ENCODE measurements at regions of chr11 and their contacts with region 1.

Region 1: GRCh38 chr11:120985718-120986569 is 38.0 kb upstream of the TBCEL start:
- DNase-seq: peak; percentile 30
- H3K4me3 Mint-ChIP-seq: peak overlapping the region; percentile 70
- H3K27ac Mint-ChIP-seq: no peak overlapping the region
- H3K4me1 Mint-ChIP-seq: peaks cover 13% of the 10 kb centered on the region
- H3K27me3 Mint-ChIP-seq: peaks cover 34% of the 10 kb centered on the region

Region 2: GRCh38 chr11:121023848-121024751 is 38.2 kb after region 1 on chr11 and contains the start of gene TBCEL:
- intact Hi-C with region 1: loop called (anchors 5 kb)
- DNase-seq: peak; percentile 77
- H3K4me3 Mint-ChIP-seq: peak within 1 kb of the TSS; percentile 89
- H3K27ac Mint-ChIP-seq: peak within 1 kb of the TSS; percentile 86
- H3K4me1 Mint-ChIP-seq: peaks cover 24% of the 10 kb centered on the region
- H3K27me3 Mint-ChIP-seq: peaks cover 8% of the 10 kb centered on the region
- total RNA-seq, gene TBCEL: 11.1 and 12.5 TPM in 2 replicates